ENCODE measurements at regions of chr5 and their contacts with region 1.

Region 1: DNA sequence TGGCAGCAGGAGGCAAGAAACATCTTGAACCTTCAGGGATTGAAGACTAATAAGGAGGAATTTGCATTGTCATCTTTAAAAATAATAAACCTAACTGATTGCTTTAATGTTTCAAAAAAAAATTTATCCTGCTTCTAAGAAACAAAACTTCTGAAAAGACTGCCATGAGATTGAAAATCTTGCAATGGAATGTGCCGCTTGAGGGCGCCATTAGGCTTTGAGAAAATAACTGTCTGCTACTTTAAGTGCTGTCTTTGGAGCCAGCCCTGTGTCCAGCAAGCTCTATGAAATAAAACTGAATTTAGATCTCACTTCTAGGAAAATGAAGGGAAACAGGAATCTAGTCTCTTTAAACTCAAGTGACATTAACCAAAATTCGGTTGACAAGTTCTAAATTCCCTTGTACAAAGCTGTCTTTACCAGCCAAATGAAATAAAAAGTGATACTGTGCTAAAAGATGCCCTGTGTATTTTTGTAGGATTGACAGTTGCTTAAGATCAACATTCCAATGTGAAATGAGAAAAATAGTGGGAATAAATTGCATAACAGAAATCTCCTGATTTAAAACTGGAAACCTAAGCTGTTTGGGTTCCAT is 79.4 kb downstream of the ESM1 start:
- ATAC-seq: peak in 4 of 8 experiments; percentile 19 to 42 (median 32)
- H3K4me3 ChIP-seq: no peak overlapping the region
- H3K27ac ChIP-seq: no peak overlapping the region
- H3K4me1 ChIP-seq: no peaks in the 10 kb centered on the region

Region 2: GRCh38 chr5:55146543-55147151 is 240.6 kb after region 1 on chr5:
- in situ Hi-C with region 1: loop called in 3 of 9 experiments (anchors 10 to 25 kb)
- ATAC-seq: peak; percentile 46 to 97 (median 94)
- H3K4me3 ChIP-seq: no peak overlapping the region
- H3K27ac ChIP-seq: no peak overlapping the region
- H3K4me1 ChIP-seq: no peaks in the 10 kb centered on the region

Region 3: GRCh38 chr5:55159763-55160492 is 253.9 kb after region 1 on chr5 and contains the start of gene GPX8:
- in situ Hi-C with region 1: loop called in 2 of 9 experiments (anchors 10 to 25 kb)
- ATAC-seq: peak; percentile 72 to 93 (median 85)
- H3K4me3 ChIP-seq: peak within 1 kb of the TSS; percentile 20 to 45 (median 38)
- H3K27ac ChIP-seq: peak within 1 kb of the TSS; percentile 47 to 82
- H3K4me1 ChIP-seq: no peaks in the 10 kb centered on the region
- total RNA-seq, gene GPX8: 10.5 to 144 (median 12.0) TPM

Region 4: DNA sequence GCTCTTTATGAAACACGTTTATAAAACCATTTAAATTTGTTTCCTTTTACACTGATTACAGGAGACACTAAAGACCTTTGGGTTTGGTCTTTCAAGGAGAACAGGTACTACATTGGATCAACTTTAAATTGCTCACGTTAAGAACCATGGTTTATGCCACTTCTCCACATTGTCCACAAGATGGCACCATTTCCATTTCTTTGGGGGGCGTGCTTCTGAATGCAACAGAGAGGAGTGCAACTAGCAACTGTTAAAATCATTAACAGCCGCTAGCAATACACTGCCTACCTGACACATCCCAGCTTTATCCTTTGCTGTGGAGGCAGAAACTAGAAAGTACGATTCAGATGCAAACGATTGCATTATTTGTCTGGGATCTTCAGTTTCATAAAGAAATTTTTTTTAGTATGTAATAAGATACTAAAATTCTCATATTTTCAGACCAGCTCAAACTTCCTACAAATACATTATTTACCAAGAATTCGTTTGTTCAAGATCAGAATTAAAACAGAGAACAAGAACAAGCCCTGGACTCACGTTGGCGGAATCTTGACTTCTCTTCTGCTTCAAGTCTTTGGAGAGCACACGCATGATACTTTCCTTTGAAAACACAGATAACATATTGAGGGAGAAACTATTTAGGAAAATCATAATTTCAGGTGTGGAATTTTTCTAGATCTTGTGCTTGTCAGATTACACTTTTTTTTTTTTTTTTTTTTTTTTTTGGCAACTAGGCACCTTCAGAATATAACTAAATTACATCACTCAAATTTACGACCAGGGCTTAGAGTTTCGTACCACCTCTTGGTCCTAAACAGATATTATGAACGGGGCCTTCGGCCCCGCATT is 266.2 kb after region 1 on chr5:
- in situ Hi-C with region 1: loop called in 1 of 9 experiments (anchors 25 kb)
- ATAC-seq: peak; percentile 15 to 42 (median 20)
- H3K4me3 ChIP-seq: peak overlapping the region; percentile 35 to 52 (median 47)
- H3K27ac ChIP-seq: no peak overlapping the region
- H3K4me1 ChIP-seq: peaks cover 3 to 9% of the 10 kb centered on the region in 2 donors

Measured in motor neuron (in vitro differentiated cells).